MCF 10A (cell line): ENCODE measurements at regions of chrX and their contacts with region 1.

Region 1: GRCh38 chrX:10722851-10723250 is 102.5 kb upstream of the MID1 start:
- DNase-seq: peak; percentile 57
- H3K4me3 Mint-ChIP-seq: no peak overlapping the region
- H3K27ac Mint-ChIP-seq: no peak overlapping the region
- H3K4me1 Mint-ChIP-seq: no peaks in the 10 kb centered on the region
- H3K27me3 Mint-ChIP-seq: peaks cover 26% of the 10 kb centered on the region
- CTCF ChIP-seq: peak; percentile 73

Region 2: DNA sequence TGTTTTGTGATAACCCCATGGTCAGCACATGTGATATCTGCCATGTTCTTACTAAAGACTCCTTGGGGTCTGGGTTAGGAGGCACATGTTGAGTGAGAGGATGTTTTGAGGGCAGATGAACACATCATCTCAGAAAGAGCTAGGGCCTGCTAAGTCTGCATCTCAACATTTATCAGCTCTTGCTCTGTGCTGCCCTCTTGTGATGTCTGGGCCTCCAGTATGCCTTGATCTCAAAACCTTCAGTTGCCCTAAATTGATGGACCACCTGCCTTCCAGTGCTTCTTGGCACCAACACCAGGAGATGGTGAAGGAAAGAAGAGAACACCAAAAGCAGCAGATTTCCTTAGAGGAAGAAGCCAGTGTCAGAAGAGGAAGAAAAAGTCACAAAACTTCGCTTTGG is 125.0 kb before region 1 on chrX:
- CTCF ChIA-PET with region 1: no interaction called
- POLR2A ChIA-PET with region 1: no interaction called
- intact Hi-C with region 1: loop called (anchors 5 kb)
- DNase-seq: peak; percentile 61
- H3K4me3 Mint-ChIP-seq: no peak overlapping the region
- H3K27ac Mint-ChIP-seq: no peak overlapping the region
- H3K4me1 Mint-ChIP-seq: no peaks in the 10 kb centered on the region
- H3K27me3 Mint-ChIP-seq: no peaks in the 10 kb centered on the region
- CTCF ChIP-seq: peak; percentile 71

Region 3: GRCh38 chrX:10636337-10636736 is 86.5 kb before region 1 on chrX:
- CTCF ChIA-PET with region 1: interaction called, 17 read pairs
- POLR2A ChIA-PET with region 1: no interaction called
- intact Hi-C with region 1: loop called (anchors 1 kb)
- DNase-seq: peak; percentile 72
- H3K4me3 Mint-ChIP-seq: peak overlapping the region; percentile 52
- H3K27ac Mint-ChIP-seq: no peak overlapping the region
- H3K4me1 Mint-ChIP-seq: peaks cover 33% of the 10 kb centered on the region
- H3K27me3 Mint-ChIP-seq: peaks cover 20% of the 10 kb centered on the region
- CTCF ChIP-seq: peak; percentile 79

Region 4: DNA sequence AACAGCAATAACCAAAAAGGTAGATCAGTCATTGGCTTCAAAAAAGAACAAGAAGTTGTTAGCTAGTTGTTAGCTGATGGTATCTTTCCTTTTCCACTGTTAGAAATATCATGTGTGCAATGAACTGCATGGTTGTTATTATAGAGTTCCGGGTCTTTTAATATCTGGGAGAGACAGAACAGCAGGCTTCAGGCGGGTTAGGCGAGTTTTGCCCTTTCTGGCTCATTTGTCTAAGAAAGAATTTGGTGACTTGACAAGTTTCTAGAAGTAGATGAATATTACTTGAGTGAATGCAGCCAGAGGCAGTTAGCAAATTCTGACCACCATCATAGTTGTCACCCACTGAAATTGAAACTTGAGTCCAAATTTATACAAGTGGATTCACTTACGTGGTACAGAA is 13.6 kb before region 1 on chrX:
- CTCF ChIA-PET with region 1: interaction called, 21 read pairs
- POLR2A ChIA-PET with region 1: no interaction called
- intact Hi-C with region 1: no loop called
- DNase-seq: no peak
- H3K4me3 Mint-ChIP-seq: no peak overlapping the region
- H3K27ac Mint-ChIP-seq: no peak overlapping the region
- H3K4me1 Mint-ChIP-seq: no peaks in the 10 kb centered on the region
- H3K27me3 Mint-ChIP-seq: peaks cover 41% of the 10 kb centered on the region
- CTCF ChIP-seq: no peak

Region 5: GRCh38 chrX:10769195-10769594 is 46.3 kb after region 1 on chrX:
- CTCF ChIA-PET with region 1: interaction called, 65 read pairs
- POLR2A ChIA-PET with region 1: interaction called, 4 read pairs
- intact Hi-C with region 1: loop called (anchors 2 kb)
- DNase-seq: peak; percentile 39
- H3K4me3 Mint-ChIP-seq: no peak overlapping the region
- H3K27ac Mint-ChIP-seq: no peak overlapping the region
- H3K4me1 Mint-ChIP-seq: no peaks in the 10 kb centered on the region
- H3K27me3 Mint-ChIP-seq: peaks cover 25% of the 10 kb centered on the region
- CTCF ChIP-seq: peak; percentile 49

Region 6: DNA sequence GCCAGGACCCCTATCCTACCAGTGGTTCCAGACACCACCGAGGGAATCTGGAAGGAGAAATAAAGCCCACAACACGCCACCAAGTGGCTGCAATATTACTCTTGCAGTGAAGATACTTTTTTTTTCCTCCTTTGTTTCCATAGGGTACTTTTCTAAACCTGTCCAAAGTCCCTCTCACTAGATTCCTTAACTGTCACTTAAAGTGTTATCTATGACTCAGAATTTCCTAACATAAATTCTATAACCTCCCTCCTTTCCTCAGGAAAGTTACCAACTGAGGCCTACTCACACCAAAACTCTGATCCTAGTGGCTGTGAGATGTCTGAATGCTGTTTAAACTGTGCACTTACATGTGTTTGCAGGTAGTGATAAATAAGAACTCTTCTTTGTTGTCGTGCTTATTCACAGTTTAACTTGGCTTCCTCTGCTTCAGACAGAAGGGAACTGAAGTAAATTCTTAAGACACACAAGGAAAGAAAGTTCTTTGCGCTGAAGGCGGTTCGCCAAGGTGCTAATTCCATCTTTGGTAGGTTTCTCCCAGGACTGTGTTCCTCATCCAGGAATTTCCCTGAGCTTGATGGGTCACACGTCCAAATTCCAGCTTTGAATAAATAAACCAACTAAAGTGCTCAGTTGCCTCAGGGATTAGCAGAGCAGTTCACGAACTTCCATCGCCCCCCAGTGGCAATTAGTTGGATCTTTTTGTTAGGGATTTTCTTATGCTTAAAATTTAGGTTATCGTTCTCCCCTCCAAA is 377.6 kb after region 1 on chrX:
- CTCF ChIA-PET with region 1: interaction called, 30 read pairs
- POLR2A ChIA-PET with region 1: interaction called, 4 read pairs
- intact Hi-C with region 1: loop called (anchors 1 kb)
- DNase-seq: peak; percentile 72
- H3K4me3 Mint-ChIP-seq: no peak overlapping the region
- H3K27ac Mint-ChIP-seq: peak overlapping the region; percentile 44
- H3K4me1 Mint-ChIP-seq: no peaks in the 10 kb centered on the region
- H3K27me3 Mint-ChIP-seq: no peaks in the 10 kb centered on the region
- CTCF ChIP-seq: peak; percentile 51